HepG2 (cell line): ENCODE measurements at regions of chr2 and their contacts with region 1.

Region 1: GRCh38 chr2:182077451-182078142 is 91.9 kb downstream of the PPP1R1C start:
- DNase-seq: peak; percentile 79
- ATAC-seq: peak; percentile 89
- H3K4me3 ChIP-seq: no peak overlapping the region
- H3K27ac ChIP-seq: no peak overlapping the region
- H3K4me1 ChIP-seq: 0 out of 2 replicates have a peak, but pooled peaks cover 12% of the 10 kb centered on the region
- H3K27me3 ChIP-seq: no peaks in the 10 kb centered on the region
- CTCF ChIP-seq: peak; percentile 84
- EP300 ChIP-seq: no peak
- POLR2A ChIP-seq: no peak
- RAD21 ChIP-seq: peak; percentile 71

Region 2: DNA sequence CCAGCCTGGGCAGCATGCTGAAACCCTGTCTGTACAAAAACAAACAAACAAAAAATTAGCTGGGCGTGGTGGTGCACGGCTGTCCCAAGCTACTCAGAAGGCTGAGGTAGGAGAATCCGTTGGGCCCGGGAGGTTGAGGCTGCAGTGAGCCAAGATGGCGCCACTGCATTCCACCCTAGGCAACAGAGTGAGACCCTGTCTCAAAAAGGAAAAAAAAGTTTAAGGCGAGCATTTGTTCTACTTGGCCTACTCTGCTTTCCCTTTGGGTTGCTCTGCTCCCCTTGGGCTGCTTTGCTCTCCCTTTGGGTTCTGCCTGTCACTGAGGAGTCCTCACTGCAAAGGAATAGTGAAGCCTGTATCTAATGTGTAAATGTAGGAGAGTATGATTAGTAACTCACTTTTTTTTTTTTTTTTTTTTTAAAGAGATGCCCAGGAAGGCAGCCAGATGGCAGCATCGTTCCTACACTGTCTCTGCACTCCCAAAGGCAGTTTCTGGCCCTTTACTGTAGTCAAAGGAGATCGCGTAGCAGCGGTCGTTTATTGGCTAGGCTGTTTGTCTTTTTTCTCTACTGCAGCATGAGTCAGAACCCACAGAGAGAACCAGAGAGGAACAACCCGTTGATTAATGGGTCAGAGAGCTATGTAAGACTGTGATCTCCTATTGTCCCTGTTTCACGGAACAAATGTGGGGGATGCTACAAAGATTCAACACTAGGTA is 1952.2 kb before region 1 on chr2:
- CTCF ChIA-PET with region 1: interaction called, 4 read pairs
- POLR2A ChIA-PET with region 1: no interaction called
- in situ Hi-C with region 1: no loop called
- intact Hi-C with region 1: loop called (anchors 10 kb)
- DNase-seq: peak; percentile 78
- ATAC-seq: peak; percentile 96
- H3K4me3 ChIP-seq: no peak overlapping the region; a peak in 1 of 6 replicates
- H3K27ac ChIP-seq: no peak overlapping the region
- H3K4me1 ChIP-seq: peaks cover 5% of the 10 kb centered on the region; the same call in 1 of the 2 replicates
- H3K27me3 ChIP-seq: no peaks in the 10 kb centered on the region
- CTCF ChIP-seq: peak; percentile 67
- EP300 ChIP-seq: no peak
- POLR2A ChIP-seq: no peak
- RAD21 ChIP-seq: 0 out of 2 replicates have a peak, but pooled peaks have one; percentile 20

Region 3: GRCh38 chr2:181683518-181684453 is 393.8 kb before region 1 on chr2:
- CTCF ChIA-PET with region 1: no interaction called
- POLR2A ChIA-PET with region 1: no interaction called
- in situ Hi-C with region 1: no loop called
- intact Hi-C with region 1: loop called (anchors 1 kb)
- DNase-seq: no peak
- ATAC-seq: peak; percentile 36
- H3K4me3 ChIP-seq: no peak overlapping the region
- H3K27ac ChIP-seq: no peak overlapping the region
- H3K4me1 ChIP-seq: no peaks in the 10 kb centered on the region
- H3K27me3 ChIP-seq: peaks cover 9 to 54% of the 10 kb centered on the region in 2 experiments
- CTCF ChIP-seq: no peak
- EP300 ChIP-seq: no peak
- POLR2A ChIP-seq: no peak
- RAD21 ChIP-seq: no peak

Region 4: DNA sequence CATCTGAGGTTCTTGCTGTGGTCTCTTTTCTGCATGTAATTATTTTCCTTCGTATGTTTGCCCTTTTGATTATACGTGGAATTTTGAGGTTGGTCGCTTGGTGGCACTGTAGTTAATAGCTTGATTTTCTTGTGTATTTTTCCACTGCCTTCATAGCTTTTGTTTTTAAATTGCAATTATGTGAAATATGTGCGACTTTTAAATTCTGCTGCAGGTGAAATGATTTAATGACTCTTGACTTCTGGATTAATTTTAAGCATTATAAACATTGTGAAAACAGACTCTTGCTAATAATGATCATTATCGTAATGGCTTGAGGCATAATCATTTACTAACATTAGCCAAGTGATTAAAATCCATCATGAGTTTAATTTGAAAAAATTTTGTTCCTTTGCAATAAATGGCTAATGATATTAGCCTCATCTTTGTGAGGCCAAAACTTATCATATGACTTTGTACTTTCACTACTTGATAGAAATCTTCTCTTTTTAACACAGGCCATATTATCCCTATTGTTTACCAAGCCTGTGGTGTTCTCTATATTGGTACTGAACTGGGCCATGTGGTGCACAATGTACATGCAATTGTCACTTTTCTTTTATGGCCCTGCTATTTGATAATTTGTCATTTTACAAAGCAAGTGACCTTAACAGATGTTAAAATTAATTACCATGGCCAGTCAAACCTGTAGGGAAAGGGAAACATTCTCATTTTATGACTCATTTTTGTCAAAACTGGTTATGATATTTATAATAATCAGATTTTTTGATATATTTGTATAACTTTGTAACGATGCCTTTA is 334.5 kb before region 1 on chr2:
- CTCF ChIA-PET with region 1: interaction called, 50 read pairs
- POLR2A ChIA-PET with region 1: no interaction called
- in situ Hi-C with region 1: loop called (anchors 5 kb)
- intact Hi-C with region 1: loop called (anchors 1 kb)
- DNase-seq: peak; percentile 66
- ATAC-seq: peak; percentile 68; the same call in 2 of the 3 replicates
- H3K4me3 ChIP-seq: no peak overlapping the region
- H3K27ac ChIP-seq: no peak overlapping the region
- H3K4me1 ChIP-seq: peaks cover 10% of the 10 kb centered on the region
- H3K27me3 ChIP-seq: no peaks in the 10 kb centered on the region
- CTCF ChIP-seq: peak; percentile 82
- EP300 ChIP-seq: peak in 1 of 2 experiments; percentile 25; a peak in 1 of 4 replicates
- POLR2A ChIP-seq: no peak
- RAD21 ChIP-seq: peak; percentile 73

Region 5: DNA sequence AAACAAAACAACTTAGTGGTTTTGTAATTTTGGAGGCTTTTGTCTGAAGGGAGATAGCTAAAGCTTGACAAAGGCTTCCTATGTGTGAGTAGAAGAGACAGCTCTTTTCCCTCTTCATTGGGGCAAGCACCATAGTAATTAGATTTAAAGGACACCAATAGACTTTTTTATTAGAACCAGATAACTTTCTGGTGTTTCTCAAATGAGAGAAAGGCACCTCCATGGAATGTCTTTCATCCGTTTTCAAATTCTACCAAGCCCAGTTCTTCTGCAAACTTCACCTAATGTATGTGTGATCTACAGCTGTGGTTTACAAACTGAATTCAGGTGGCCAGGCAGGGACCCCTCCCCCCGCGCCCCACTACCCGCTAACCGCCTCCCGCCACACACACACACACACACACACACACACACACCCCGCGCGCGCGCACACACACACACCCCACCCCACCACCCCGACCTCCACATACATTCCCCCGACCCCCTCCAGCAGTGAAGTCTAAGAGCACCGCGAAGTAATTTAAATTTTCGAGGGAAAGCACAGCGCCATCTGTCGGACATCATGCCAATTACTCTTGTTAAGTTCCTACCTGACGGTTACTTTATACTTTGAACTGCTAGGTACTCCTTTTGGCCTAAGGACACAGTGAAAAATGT is 123.6 kb before region 1 on chr2:
- CTCF ChIA-PET with region 1: no interaction called
- POLR2A ChIA-PET with region 1: no interaction called
- in situ Hi-C with region 1: no loop called
- intact Hi-C with region 1: loop called (anchors 10 kb)
- DNase-seq: peak; percentile 70
- ATAC-seq: peak; percentile 92
- H3K4me3 ChIP-seq: peak overlapping the region; percentile 52 to 58 (median 53)
- H3K27ac ChIP-seq: peak overlapping the region; percentile 16
- H3K4me1 ChIP-seq: peaks cover 40% of the 10 kb centered on the region
- H3K27me3 ChIP-seq: no peaks in the 10 kb centered on the region; a peak in 1 of 5 replicates
- CTCF ChIP-seq: peak; percentile 81
- EP300 ChIP-seq: no peak
- POLR2A ChIP-seq: no peak
- RAD21 ChIP-seq: no peak

Region 6: GRCh38 chr2:182422864-182423263 is 345.3 kb after region 1 on chr2:
- CTCF ChIA-PET with region 1: no interaction called
- POLR2A ChIA-PET with region 1: no interaction called
- in situ Hi-C with region 1: no loop called
- intact Hi-C with region 1: no loop called
- DNase-seq: no peak
- ATAC-seq: no peak
- H3K4me3 ChIP-seq: no peak overlapping the region
- H3K27ac ChIP-seq: no peak overlapping the region
- H3K4me1 ChIP-seq: no peaks in the 10 kb centered on the region
- H3K27me3 ChIP-seq: no peaks in the 10 kb centered on the region
- CTCF ChIP-seq: no peak
- EP300 ChIP-seq: no peak
- POLR2A ChIP-seq: no peak
- RAD21 ChIP-seq: no peak

Region 7: GRCh38 chr2:183490914-183491313 is 1413.3 kb after region 1 on chr2:
- CTCF ChIA-PET with region 1: no interaction called
- POLR2A ChIA-PET with region 1: no interaction called
- in situ Hi-C with region 1: no loop called
- intact Hi-C with region 1: no loop called
- DNase-seq: no peak
- ATAC-seq: no peak
- H3K4me3 ChIP-seq: no peak overlapping the region
- H3K27ac ChIP-seq: no peak overlapping the region
- H3K4me1 ChIP-seq: no peaks in the 10 kb centered on the region
- H3K27me3 ChIP-seq: no peaks in the 10 kb centered on the region
- CTCF ChIP-seq: no peak
- EP300 ChIP-seq: no peak
- POLR2A ChIP-seq: no peak
- RAD21 ChIP-seq: no peak